ENCODE measurements at regions of chr15 and their contacts with region 1.

Region 1: GRCh38 chr15:90954712-90955671 is at the start of gene RCCD1:
- DNase-seq: peak; percentile 91
- ATAC-seq: peak; percentile 98
- H3K4me3 ChIP-seq: peak within 1 kb of the TSS; percentile 87
- H3K27ac ChIP-seq: peak within 1 kb of the TSS; percentile 98
- H3K4me1 ChIP-seq: peaks cover 3% of the 10 kb centered on the region; the same call in 1 of the 2 replicates
- H3K27me3 ChIP-seq: no peaks in the 10 kb centered on the region
- CTCF ChIP-seq: no peak
- EP300 ChIP-seq: no peak; a peak in 1 of 4 replicates
- POLR2A ChIP-seq: peak; percentile 93
- RAD21 ChIP-seq: no peak
- polyA plus RNA-seq, gene RCCD1: 5.2 to 8.0 TPM

Region 2: GRCh38 chr15:90845201-90845949 is 109.6 kb before region 1 on chr15:
- CTCF ChIA-PET with region 1: no interaction called
- POLR2A ChIA-PET with region 1: no interaction called
- RAD21 ChIA-PET with region 1: no interaction called
- SMC1A ChIA-PET with region 1: no interaction called
- in situ Hi-C with region 1: no loop called
- intact Hi-C with region 1: no loop called
- DNase-seq: peak; percentile 50
- ATAC-seq: peak; percentile 96
- H3K4me3 ChIP-seq: no peak overlapping the region
- H3K27ac ChIP-seq: peak overlapping the region; percentile 40
- H3K4me1 ChIP-seq: peaks cover 9% of the 10 kb centered on the region
- H3K27me3 ChIP-seq: no peaks in the 10 kb centered on the region
- CTCF ChIP-seq: no peak
- EP300 ChIP-seq: peak in 1 of 2 experiments; percentile 33; a peak in 1 of 4 replicates
- POLR2A ChIP-seq: no peak
- RAD21 ChIP-seq: no peak

Region 3: GRCh38 chr15:90967206-90967605 is 12.2 kb after region 1 on chr15:
- CTCF ChIA-PET with region 1: interaction called, 12 read pairs
- POLR2A ChIA-PET with region 1: interaction called, 5 read pairs
- RAD21 ChIA-PET with region 1: interaction called, 3 read pairs
- SMC1A ChIA-PET with region 1: interaction called, 3 read pairs
- in situ Hi-C with region 1: no loop called
- intact Hi-C with region 1: no loop called
- DNase-seq: no peak
- ATAC-seq: no peak
- H3K4me3 ChIP-seq: no peak overlapping the region
- H3K27ac ChIP-seq: no peak overlapping the region
- H3K4me1 ChIP-seq: no peaks in the 10 kb centered on the region
- H3K27me3 ChIP-seq: no peaks in the 10 kb centered on the region
- CTCF ChIP-seq: no peak
- EP300 ChIP-seq: no peak
- POLR2A ChIP-seq: no peak
- RAD21 ChIP-seq: no peak

Region 4: GRCh38 chr15:90994417-90995311 is 39.7 kb after region 1 on chr15 and contains the start of gene PRC1:
- CTCF ChIA-PET with region 1: interaction called, 3 read pairs
- POLR2A ChIA-PET with region 1: interaction called, 26 read pairs
- RAD21 ChIA-PET with region 1: interaction called, 3 read pairs
- SMC1A ChIA-PET with region 1: no interaction called
- in situ Hi-C with region 1: no loop called
- intact Hi-C with region 1: loop called (anchors 5 kb)
- DNase-seq: peak; percentile 77
- ATAC-seq: peak; percentile 94
- H3K4me3 ChIP-seq: peak within 1 kb of the TSS; percentile 99
- H3K27ac ChIP-seq: peak within 1 kb of the TSS; percentile 96
- H3K4me1 ChIP-seq: peaks cover 3% of the 10 kb centered on the region; the same call in 1 of the 2 replicates
- H3K27me3 ChIP-seq: no peaks in the 10 kb centered on the region
- CTCF ChIP-seq: no peak
- EP300 ChIP-seq: no peak
- POLR2A ChIP-seq: peak; percentile 95
- RAD21 ChIP-seq: no peak
- polyA plus RNA-seq, gene PRC1: 100 to 130 TPM

Region 5: DNA sequence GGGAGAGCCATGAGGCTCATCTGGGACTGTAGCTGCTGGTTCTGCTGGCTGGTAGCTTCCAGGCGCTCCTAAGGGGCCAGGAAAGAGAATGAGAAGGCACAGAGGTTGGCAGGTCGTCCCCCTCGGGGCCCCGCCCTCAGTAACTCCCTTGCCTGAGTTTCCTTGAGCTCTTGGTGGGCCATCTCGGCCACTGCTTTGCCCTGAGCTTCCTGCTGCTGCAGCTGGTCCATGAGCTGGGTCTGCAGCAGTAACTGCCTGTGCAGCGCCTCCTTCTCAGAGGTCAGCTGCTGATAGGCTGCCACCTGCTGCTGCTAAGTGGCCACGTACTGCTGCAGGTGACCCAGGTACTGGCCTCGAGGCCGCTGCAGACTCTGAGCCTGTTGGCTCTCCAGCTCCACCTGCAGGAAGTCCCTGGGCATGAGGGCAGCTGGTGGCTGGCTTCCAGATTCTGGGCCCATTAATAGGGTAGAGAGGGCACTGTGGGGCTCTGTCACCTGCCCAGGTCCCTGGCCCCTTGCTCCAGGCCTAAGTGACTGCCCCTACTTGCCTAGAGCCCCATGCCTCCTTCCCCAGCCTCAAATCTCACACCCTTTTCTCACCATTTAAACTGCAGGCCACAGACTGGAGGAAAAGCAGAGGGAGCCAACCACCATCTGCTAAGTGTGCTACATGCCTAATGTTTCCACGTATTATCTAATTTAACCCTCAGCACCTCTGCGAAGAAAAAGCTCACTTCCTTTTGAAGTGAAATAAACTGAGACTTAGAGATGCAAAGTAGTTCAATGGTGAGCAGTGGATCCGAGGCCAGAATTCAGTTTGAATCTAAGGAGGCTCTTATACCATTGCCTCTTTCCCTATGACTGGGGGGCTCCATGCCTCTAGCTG is 78.2 kb after region 1 on chr15:
- CTCF ChIA-PET with region 1: interaction called, 46 read pairs
- POLR2A ChIA-PET with region 1: no interaction called
- RAD21 ChIA-PET with region 1: interaction called, 7 read pairs
- SMC1A ChIA-PET with region 1: interaction called, 11 read pairs
- in situ Hi-C with region 1: no loop called
- intact Hi-C with region 1: no loop called
- DNase-seq: no peak
- ATAC-seq: peak; percentile 94
- H3K4me3 ChIP-seq: no peak overlapping the region
- H3K27ac ChIP-seq: no peak overlapping the region
- H3K4me1 ChIP-seq: no peaks in the 10 kb centered on the region
- H3K27me3 ChIP-seq: no peaks in the 10 kb centered on the region; a peak in 1 of 4 replicates
- CTCF ChIP-seq: peak; percentile 62 to 86 (median 66)
- EP300 ChIP-seq: no peak
- POLR2A ChIP-seq: no peak
- RAD21 ChIP-seq: peak; percentile 61; the same call in 1 of the 2 replicates